Heart right ventricle (tissue), 16 donors: ENCODE measurements at regions of chrX and their contacts with region 1.

Region 1: GRCh38 chrX:109714340-109714958 is 18.6 kb downstream of the ACSL4 start:
- DNase-seq: no peak
- ATAC-seq: no peak
- H3K4me3 ChIP-seq: no peak overlapping the region
- H3K27ac ChIP-seq: no peak overlapping the region
- H3K4me1 ChIP-seq: peaks cover 0 to 74% (median 20%) of the 10 kb centered on the region in 9 donors
- H3K27me3 ChIP-seq: peaks cover 0 to 27% (median 0%) of the 10 kb centered on the region in 7 donors
- CTCF ChIP-seq: no peak

Region 2: DNA sequence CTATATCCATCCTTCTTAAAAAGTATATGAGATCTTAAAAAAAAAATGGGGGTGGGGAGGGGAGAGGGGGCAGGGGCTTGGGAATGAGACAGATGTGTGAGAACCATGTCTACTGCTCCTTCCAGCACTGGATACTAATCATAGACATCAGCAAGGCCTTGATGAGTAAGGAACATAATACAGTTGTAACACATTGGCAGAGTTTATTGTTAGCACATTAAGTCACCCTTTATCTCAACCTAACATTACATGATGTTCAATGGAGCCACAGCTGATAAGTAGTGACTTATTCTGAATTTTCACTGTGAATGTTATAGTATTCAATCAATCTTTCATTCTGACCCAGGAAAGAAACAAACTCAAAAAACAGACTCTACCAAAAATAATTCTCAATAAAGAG is 42.2 kb before region 1 on chrX:
- intact Hi-C with region 1: no loop called
- DNase-seq: no peak
- ATAC-seq: peak in 6 of 8 donors; percentile 56 to 89 (median 75)
- H3K4me3 ChIP-seq: no peak overlapping the region
- H3K27ac ChIP-seq: no peak overlapping the region
- H3K4me1 ChIP-seq: no peaks in the 10 kb centered on the region
- H3K27me3 ChIP-seq: peaks cover 0 to 16% (median 0%) of the 10 kb centered on the region in 7 donors
- CTCF ChIP-seq: no peak

Region 3: GRCh38 chrX:109862433-109862832 is 148.0 kb after region 1 on chrX:
- intact Hi-C with region 1: loop called in 9 of 10 experiments (anchors 2 to 10 kb)
- DNase-seq: no peak
- ATAC-seq: no peak
- H3K4me3 ChIP-seq: no peak overlapping the region
- H3K27ac ChIP-seq: no peak overlapping the region
- H3K4me1 ChIP-seq: peaks cover 0 to 5% (median 0%) of the 10 kb centered on the region in 9 donors
- H3K27me3 ChIP-seq: peaks cover 0 to 32% (median 0%) of the 10 kb centered on the region in 7 donors
- CTCF ChIP-seq: no peak

Region 4: GRCh38 chrX:111145878-111146277 is 1431.4 kb after region 1 on chrX:
- intact Hi-C with region 1: no loop called
- DNase-seq: no peak
- ATAC-seq: no peak
- H3K4me3 ChIP-seq: no peak overlapping the region
- H3K27ac ChIP-seq: no peak overlapping the region
- H3K4me1 ChIP-seq: no peaks in the 10 kb centered on the region
- H3K27me3 ChIP-seq: peaks cover 0 to 58% (median 0%) of the 10 kb centered on the region in 7 donors
- CTCF ChIP-seq: no peak